WTC11 (cell line): ENCODE measurements at regions of chr12 and their contacts with region 1.

Region 1: DNA sequence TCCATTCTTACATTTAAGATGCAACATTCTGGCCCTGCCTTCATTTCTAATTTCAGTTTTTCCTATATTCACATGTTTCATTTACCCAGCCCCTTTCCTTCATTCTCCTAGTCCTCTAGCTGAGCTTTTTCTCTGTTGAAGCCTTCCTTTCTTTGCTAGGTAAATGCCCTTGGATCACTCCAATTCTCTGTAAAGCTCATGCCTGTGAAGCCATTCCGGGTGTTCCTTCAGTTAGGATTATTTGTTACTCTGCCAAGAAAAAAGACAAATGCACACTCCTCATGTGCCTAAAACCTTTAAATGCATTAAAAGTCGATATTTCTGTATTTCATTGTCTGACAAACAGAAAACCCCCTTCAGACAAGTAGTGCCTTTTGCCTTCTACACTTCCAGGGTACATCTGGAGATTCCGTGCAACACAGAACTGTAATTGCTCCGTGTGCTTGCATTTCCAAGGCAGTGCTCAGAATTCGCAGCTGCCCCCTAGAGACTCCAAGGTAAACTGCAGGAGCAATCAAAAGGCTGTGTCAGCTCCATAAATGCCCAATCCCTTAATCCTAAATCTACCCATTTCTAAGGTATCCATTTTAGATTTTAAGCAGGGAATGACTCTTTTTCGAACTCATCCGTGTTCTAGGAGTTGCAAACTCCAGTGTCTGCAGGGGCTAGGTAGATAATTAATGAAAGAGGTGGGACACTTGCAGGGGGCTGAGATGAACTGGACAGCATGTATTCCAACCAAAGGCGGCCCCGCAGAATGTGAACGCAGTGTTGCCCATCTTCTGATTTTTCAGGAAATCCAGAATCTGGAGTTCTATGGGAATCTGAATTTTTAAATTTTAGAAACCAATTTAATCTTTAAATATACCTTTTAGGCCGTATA is 320.2 kb downstream of the GRIN2B start:
- DNase-seq: peak; percentile 62
- ATAC-seq: peak; percentile 98
- H3K4me3 Mint-ChIP-seq: no peak overlapping the region
- H3K27ac Mint-ChIP-seq: no peak overlapping the region
- H3K4me1 Mint-ChIP-seq: peaks cover 6% of the 10 kb centered on the region; the same call in 1 of the 2 replicates
- H3K27me3 Mint-ChIP-seq: peaks cover 3% of the 10 kb centered on the region; the same call in 1 of the 2 replicates
- CTCF ChIP-seq: peak; percentile 81

Region 2: GRCh38 chr12:13278249-13278787 is 382.9 kb before region 1 on chr12:
- CTCF ChIA-PET with region 1: interaction called, 11 read pairs
- POLR2A ChIA-PET with region 1: no interaction called
- DNase-seq: peak; percentile 83
- ATAC-seq: peak; percentile 90
- H3K4me3 Mint-ChIP-seq: peak overlapping the region; percentile 24; the same call in 1 of the 2 replicates
- H3K27ac Mint-ChIP-seq: no peak overlapping the region
- H3K4me1 Mint-ChIP-seq: peaks cover 28% of the 10 kb centered on the region
- H3K27me3 Mint-ChIP-seq: no peaks in the 10 kb centered on the region; the same call in none of the 2 replicates
- CTCF ChIP-seq: peak; percentile 99

Region 3: DNA sequence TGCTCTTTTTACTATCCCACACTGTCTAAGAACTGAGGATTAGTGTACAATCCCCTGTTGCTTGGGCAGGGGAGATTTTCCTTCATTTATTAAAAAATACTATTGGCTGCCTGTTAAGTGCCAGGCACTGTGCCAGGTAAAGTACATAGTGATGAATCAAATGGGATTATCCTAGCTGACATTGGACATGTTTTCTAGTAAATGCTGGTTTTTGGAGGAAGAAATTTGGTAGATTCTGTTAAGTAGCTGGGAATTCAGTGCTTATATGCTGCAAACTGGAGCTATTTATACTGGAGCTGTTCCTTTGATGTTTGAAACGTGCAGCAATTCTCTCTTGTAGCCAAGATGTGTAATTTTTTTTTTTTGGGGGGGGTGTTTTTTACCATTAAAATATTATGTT is 165.1 kb before region 1 on chr12:
- CTCF ChIA-PET with region 1: no interaction called
- POLR2A ChIA-PET with region 1: no interaction called
- DNase-seq: no peak
- ATAC-seq: no peak
- H3K4me3 Mint-ChIP-seq: no peak overlapping the region
- H3K27ac Mint-ChIP-seq: no peak overlapping the region
- H3K4me1 Mint-ChIP-seq: peaks cover 21% of the 10 kb centered on the region
- H3K27me3 Mint-ChIP-seq: no peaks in the 10 kb centered on the region; the same call in 1 of the 2 replicates
- CTCF ChIP-seq: no peak

Region 4: DNA sequence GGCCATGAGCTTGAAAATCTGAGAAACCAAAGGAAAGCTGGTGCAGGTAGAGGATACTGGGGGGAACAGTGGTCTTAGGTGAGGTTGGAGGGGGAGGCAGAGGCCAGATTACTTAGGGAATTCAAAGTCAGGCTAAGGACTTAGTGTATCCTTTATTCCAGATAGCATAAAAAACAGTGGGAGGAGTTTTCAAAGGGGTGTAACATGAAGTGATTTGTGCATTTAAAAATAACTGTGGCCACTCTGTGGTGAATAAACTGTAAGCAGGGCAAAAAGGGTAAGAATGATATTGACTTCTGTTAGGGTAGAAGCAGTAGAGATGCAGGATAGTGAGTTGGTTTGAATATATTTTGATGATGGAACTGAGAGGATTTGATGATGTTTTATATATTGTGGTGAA is 151.5 kb before region 1 on chr12:
- CTCF ChIA-PET with region 1: no interaction called
- POLR2A ChIA-PET with region 1: no interaction called
- DNase-seq: no peak
- ATAC-seq: no peak
- H3K4me3 Mint-ChIP-seq: no peak overlapping the region
- H3K27ac Mint-ChIP-seq: no peak overlapping the region
- H3K4me1 Mint-ChIP-seq: no peaks in the 10 kb centered on the region
- H3K27me3 Mint-ChIP-seq: no peaks in the 10 kb centered on the region
- CTCF ChIP-seq: no peak